Activated naive CD4-positive, alpha-beta T cell treated with anti-CD3 and anti-CD28 coated beads for 36 hours (primary cell): ENCODE measurements at regions of chr2 and their contacts with region 1.

Region 1: DNA sequence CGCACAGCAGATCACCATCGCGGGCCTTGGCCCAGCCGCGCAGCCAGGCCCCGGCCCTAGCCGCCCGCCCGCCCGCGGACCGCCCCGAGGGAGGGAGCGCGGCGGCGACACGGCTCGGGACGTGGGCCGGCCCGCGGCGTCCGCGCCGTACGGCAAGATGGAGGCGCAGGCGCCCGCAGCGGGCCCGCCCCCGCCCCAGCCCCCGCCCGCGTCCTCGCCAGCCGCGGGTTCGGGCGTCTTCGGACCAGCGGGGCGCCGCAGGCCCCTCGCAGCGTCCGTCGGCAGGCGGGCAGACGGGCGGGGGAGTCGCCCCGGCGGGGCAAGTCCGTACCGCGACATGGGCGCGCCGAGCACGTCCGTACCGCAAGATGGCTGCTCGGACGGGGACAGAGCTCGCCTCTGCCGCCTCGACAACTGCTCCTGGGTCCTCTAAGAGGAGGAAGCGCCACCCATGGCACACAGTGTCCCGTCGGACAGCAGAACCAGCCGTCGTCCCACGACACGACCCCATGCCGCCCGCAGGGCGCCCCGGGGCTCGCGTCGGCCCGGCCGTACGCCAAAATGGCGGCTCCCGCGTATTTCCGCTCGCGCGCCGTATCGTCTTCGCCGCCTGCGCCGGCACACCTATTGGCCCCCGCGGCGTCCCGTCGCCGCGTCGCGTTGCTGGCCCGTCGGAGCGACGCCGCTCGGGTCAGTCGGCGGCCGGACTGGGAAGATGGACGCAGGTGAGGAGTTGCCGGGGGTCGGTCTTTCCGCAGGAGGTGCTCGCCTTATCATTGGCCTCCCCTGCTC is at the starts of genes ATG4B and THAP4:
- DNase-seq: peak; percentile 76
- H3K4me3 Mint-ChIP-seq: peak within 1 kb of the TSS; percentile 84
- H3K27ac Mint-ChIP-seq: peak within 1 kb of the TSS; percentile 80
- H3K4me1 Mint-ChIP-seq: peaks cover 54% of the 10 kb centered on the region
- H3K27me3 Mint-ChIP-seq: no peaks in the 10 kb centered on the region
- total RNA-seq, gene ATG4B: 71.5 to 82.5 TPM
- total RNA-seq, gene THAP4: 36.4 to 38.8 TPM

Region 2: DNA sequence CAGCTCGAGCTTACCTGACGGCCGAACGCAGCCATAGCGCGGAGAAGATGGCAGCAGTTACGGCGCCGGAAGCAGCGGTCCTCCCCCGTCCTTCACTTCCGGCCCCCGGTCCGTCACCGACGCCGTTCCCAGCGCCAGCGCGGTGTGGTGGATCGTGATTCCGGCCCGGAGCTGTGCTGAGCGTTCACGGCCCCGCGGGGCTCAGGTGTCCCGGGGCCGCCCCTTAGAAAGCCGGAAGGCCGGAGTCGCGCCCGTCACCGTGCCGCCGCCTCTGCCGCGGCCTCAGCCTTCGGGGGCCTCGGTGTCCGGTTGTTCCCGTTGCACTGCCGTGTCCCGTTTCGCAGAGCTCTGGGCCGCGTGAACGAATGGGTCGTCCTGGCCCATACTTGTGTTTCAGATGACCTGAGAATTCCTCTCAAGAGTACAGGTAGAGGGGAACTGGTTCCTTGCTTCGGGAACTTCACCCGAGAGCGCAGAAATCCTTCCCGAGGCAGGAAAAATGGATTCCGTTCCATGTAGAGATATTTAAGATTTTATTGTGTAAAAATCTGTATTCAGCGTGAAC is 534.9 kb before region 1 on chr2 and contains the start of gene MTERF4:
- CTCF ChIA-PET with region 1: no interaction called
- intact Hi-C with region 1: loop called (anchors 5 kb)
- DNase-seq: peak; percentile 93
- H3K4me3 Mint-ChIP-seq: peak within 1 kb of the TSS; percentile 97
- H3K27ac Mint-ChIP-seq: peak within 1 kb of the TSS; percentile 99
- H3K4me1 Mint-ChIP-seq: peaks cover 62% of the 10 kb centered on the region
- H3K27me3 Mint-ChIP-seq: no peaks in the 10 kb centered on the region
- total RNA-seq, gene MTERF4: 35.0 to 38.6 TPM

Region 3: DNA sequence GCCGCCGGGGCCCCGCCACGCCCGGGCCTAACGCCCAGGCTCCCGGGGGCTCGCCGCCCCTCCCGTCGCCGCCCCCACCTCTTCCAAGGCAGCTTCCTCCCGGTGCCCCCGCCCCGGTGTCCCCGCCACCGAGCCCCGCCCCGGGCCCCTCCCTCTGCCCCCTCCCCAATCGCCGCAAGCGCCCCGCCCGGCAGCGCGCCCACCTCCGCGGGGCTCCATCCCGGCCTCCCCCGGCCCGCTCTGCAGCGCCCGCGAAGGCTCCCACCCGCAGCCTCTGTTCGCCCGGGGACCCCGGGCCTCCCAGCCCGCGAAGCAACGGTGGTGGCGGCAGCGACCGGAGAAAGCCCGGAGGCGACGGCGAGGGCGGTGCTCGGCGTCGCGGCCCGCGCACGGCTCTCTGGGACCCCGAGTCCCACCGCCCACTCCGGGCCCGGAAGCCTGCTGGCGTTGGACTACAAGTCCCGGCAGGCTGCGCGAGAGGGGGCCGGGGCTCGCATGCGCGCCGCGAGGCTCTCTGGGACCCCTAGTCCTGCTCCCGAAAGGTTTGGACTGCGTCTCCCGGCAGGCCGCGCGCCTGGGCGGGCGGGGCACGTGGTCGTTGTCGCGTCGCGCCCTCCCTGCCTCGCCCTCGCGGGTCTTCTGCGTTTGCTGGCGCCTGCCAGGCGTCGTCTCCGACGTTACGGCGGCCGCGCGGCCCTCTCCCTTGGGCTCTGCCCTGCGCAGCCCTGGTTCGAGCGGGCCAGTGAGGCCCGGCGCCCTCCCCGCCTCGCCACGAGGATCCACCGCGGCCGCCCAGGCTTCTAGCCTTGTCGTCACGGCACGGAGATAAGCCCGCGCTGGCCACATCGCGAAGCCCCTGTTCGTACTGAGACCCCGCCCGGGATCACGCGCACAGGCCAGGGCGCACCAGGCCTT is 128.7 kb before region 1 on chr2 and contains the start of gene STK25:
- CTCF ChIA-PET with region 1: no interaction called
- intact Hi-C with region 1: loop called (anchors 5 kb)
- DNase-seq: peak; percentile 98
- H3K4me3 Mint-ChIP-seq: peak within 1 kb of the TSS; percentile 79
- H3K27ac Mint-ChIP-seq: no peak within 1 kb of the TSS
- H3K4me1 Mint-ChIP-seq: peaks cover 21% of the 10 kb centered on the region
- H3K27me3 Mint-ChIP-seq: no peaks in the 10 kb centered on the region
- total RNA-seq, gene STK25: 81.2 to 88.4 TPM

Region 4: GRCh38 chr2:241686649-241687425 is 49.6 kb after region 1 on chr2 and contains the start of gene DTYMK:
- CTCF ChIA-PET with region 1: no interaction called
- intact Hi-C with region 1: loop called (anchors 1 kb)
- DNase-seq: peak; percentile 97
- H3K4me3 Mint-ChIP-seq: peak within 1 kb of the TSS; percentile 99
- H3K27ac Mint-ChIP-seq: peak within 1 kb of the TSS; percentile 94
- H3K4me1 Mint-ChIP-seq: peaks cover 39% of the 10 kb centered on the region
- H3K27me3 Mint-ChIP-seq: no peaks in the 10 kb centered on the region
- total RNA-seq, gene DTYMK: 88.0 to 93.8 TPM

Region 5: DNA sequence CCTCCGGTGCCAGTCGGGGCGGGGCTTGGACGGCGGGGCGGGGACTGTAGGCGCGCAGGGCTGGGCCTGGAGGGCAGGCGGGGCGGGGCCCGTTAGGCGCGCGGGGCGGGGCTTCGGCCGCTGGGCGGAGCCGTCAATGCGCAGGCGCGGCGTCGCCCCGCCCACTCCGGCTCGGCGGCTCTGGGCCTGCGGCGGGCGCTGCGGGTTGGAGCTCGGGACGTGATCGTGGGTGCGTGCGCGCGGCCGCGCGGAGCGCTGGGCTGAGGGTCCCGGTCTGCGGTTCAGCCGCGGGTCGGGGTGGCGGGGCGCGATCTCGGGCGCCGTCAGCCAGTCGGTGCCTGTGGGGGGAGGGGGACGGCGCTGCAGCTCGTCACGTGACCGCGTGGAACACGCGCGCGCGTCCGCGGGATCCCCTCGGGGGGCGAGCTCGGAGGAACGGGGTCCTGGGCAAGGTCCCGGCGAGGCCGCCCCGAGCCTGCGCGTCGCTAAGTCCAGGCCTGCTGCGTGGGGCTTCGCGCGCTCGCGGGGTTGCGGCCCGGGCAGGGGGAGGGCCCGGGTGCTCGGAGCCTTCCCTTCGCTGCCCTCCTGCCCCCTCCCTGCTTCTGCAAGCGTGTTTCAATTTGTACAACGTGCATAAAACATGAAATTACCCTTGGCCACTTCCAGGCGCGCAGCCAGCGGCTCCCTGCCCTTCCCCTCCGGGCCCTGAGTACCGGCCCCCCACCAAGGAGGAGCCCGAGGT is 97.4 kb after region 1 on chr2 and contains the start of gene D2HGDH:
- CTCF ChIA-PET with region 1: no interaction called
- intact Hi-C with region 1: loop called (anchors 1 kb)
- DNase-seq: peak; percentile 95
- H3K4me3 Mint-ChIP-seq: peak within 1 kb of the TSS; percentile 78
- H3K27ac Mint-ChIP-seq: no peak within 1 kb of the TSS
- H3K4me1 Mint-ChIP-seq: peaks cover 52% of the 10 kb centered on the region
- H3K27me3 Mint-ChIP-seq: no peaks in the 10 kb centered on the region
- total RNA-seq, gene D2HGDH: 19.4 to 23.1 TPM